ENCODE measurements at regions of chr20 and their contacts with region 1.

Region 1: GRCh38 chr20:407133-407952 is 756 bp upstream of the RBCK1 start:
- DNase-seq: peak in 8 of 9 donors; percentile 31 to 74 (median 39)
- ATAC-seq: peak; percentile 49
- H3K4me3 ChIP-seq: peak overlapping the region; percentile 71
- H3K4me3 Mint-ChIP-seq: peak overlapping the region; percentile 86 to 96 (median 94)
- H3K27ac ChIP-seq: peak overlapping the region; percentile 83
- H3K27ac Mint-ChIP-seq: peak overlapping the region; percentile 89 to 99 (median 96)
- H3K4me1 ChIP-seq: peaks cover 20 to 32% of the 10 kb centered on the region in 2 donors
- H3K4me1 Mint-ChIP-seq: peaks cover 26 to 59% (median 46%) of the 10 kb centered on the region in 7 donors
- H3K27me3 ChIP-seq: no peaks in the 10 kb centered on the region
- H3K27me3 Mint-ChIP-seq: no peaks in the 10 kb centered on the region

Region 2: DNA sequence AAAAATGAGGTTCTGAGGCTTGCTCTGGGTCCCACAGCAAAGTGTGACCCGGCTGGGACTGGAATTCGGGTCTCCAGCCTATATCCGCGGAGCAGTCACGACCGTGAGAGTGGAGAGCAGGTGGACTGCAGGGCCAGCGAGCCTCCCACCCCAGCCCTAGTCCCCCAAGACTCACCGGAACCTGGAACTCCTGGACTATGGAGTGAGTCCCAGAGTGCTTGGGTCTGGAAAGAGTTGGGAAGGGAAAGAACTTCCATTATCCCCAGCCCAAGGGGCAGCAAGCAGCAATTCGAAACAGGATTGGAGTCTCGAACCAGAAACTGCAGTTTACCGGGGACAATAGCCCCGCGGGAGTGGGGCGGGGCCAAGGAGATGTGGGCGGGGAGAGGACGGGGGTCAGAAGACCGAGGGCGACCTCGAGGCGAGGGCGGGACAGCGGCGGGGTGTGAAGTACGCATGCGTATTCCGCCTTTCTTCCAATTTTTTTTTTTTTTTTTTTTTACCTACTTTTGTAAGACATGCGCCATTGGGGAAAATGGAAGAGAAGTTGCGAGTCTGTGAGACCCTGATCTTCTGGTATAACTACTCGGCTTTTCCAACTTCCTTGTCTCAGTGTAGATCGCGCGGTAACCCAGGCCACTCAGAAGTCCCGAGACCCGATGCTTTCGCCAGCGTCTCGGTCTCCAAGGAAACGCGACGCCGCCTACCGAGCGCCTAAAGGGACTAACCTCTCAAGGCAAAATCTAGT is 117.1 kb before region 1 on chr20 and contains the start of gene C20orf96:
- CTCF ChIA-PET with region 1: no interaction called
- POLR2A ChIA-PET with region 1: no interaction called
- intact Hi-C with region 1: loop called in 1 of 2 experiments (anchors 1 kb)
- DNase-seq: peak; percentile 69 to 89 (median 80)
- ATAC-seq: peak; percentile 96
- H3K4me3 ChIP-seq: peak within 1 kb of the TSS; percentile 52
- H3K4me3 Mint-ChIP-seq: no peak within 1 kb of the TSS
- H3K27ac ChIP-seq: peak within 1 kb of the TSS; percentile 62
- H3K27ac Mint-ChIP-seq: peak within 1 kb of the TSS in 3 of 9 donors; percentile 28 to 81 (median 69)
- H3K4me1 ChIP-seq: peaks cover 11 to 20% of the 10 kb centered on the region in 2 donors
- H3K4me1 Mint-ChIP-seq: peaks cover 1 to 35% (median 9%) of the 10 kb centered on the region in 7 donors
- H3K27me3 ChIP-seq: no peaks in the 10 kb centered on the region
- H3K27me3 Mint-ChIP-seq: no peaks in the 10 kb centered on the region
- total RNA-seq, gene C20orf96: 3.4 to 5.7 (median 4.8) TPM

Region 3: GRCh38 chr20:364905-365794 is 42.2 kb before region 1 on chr20:
- CTCF ChIA-PET with region 1: no interaction called
- POLR2A ChIA-PET with region 1: interaction called, 5 read pairs
- intact Hi-C with region 1: loop called in 1 of 2 experiments (anchors 1 kb)
- DNase-seq: no peak
- ATAC-seq: no peak
- H3K4me3 ChIP-seq: no peak overlapping the region
- H3K4me3 Mint-ChIP-seq: peak overlapping the region; percentile 41 to 73 (median 58)
- H3K27ac ChIP-seq: no peak overlapping the region
- H3K27ac Mint-ChIP-seq: peak overlapping the region in 7 of 9 donors; percentile 49 to 96 (median 82)
- H3K4me1 ChIP-seq: peaks cover 0 to 20% of the 10 kb centered on the region in 2 donors
- H3K4me1 Mint-ChIP-seq: peaks cover 23 to 55% (median 47%) of the 10 kb centered on the region in 7 donors
- H3K27me3 ChIP-seq: no peaks in the 10 kb centered on the region
- H3K27me3 Mint-ChIP-seq: no peaks in the 10 kb centered on the region

Region 4: GRCh38 chr20:431012-431904 is 23.9 kb after region 1 on chr20:
- CTCF ChIA-PET with region 1: no interaction called
- POLR2A ChIA-PET with region 1: interaction called, 12 read pairs
- intact Hi-C with region 1: loop called in 1 of 2 experiments (anchors 2 kb)
- DNase-seq: peak in 7 of 9 donors; percentile 25 to 47 (median 29)
- ATAC-seq: peak; percentile 65
- H3K4me3 ChIP-seq: no peak overlapping the region
- H3K4me3 Mint-ChIP-seq: no peak overlapping the region
- H3K27ac ChIP-seq: no peak overlapping the region
- H3K27ac Mint-ChIP-seq: peak overlapping the region in 7 of 9 donors; percentile 17 to 88 (median 72)
- H3K4me1 ChIP-seq: peaks cover 17 to 21% of the 10 kb centered on the region in 2 donors
- H3K4me1 Mint-ChIP-seq: peaks cover 27 to 57% (median 45%) of the 10 kb centered on the region in 7 donors
- H3K27me3 ChIP-seq: no peaks in the 10 kb centered on the region
- H3K27me3 Mint-ChIP-seq: no peaks in the 10 kb centered on the region

Region 5: GRCh38 chr20:462199-462991 is 55.1 kb after region 1 on chr20 and contains the start of gene TBC1D20:
- CTCF ChIA-PET with region 1: interaction called, 3 read pairs
- POLR2A ChIA-PET with region 1: interaction called, 5 read pairs
- intact Hi-C with region 1: loop called (anchors 1 kb)
- DNase-seq: peak; percentile 81 to 92 (median 89)
- ATAC-seq: peak; percentile 99
- H3K4me3 ChIP-seq: peak within 1 kb of the TSS; percentile 71
- H3K4me3 Mint-ChIP-seq: peak within 1 kb of the TSS; percentile 90 to 100 (median 97)
- H3K27ac ChIP-seq: peak within 1 kb of the TSS; percentile 85
- H3K27ac Mint-ChIP-seq: peak within 1 kb of the TSS; percentile 90 to 98 (median 95)
- H3K4me1 ChIP-seq: peaks cover 26 to 33% of the 10 kb centered on the region in 2 donors
- H3K4me1 Mint-ChIP-seq: peaks cover 31 to 55% (median 49%) of the 10 kb centered on the region in 7 donors
- H3K27me3 ChIP-seq: no peaks in the 10 kb centered on the region
- H3K27me3 Mint-ChIP-seq: peaks cover 0 to 2% (median 0%) of the 10 kb centered on the region in 5 donors
- total RNA-seq, gene TBC1D20: 26.3 to 45.7 (median 35.4) TPM

Region 6: GRCh38 chr20:543369-544152 is 136.2 kb after region 1 on chr20 and contains the start of gene CSNK2A1:
- CTCF ChIA-PET with region 1: no interaction called
- POLR2A ChIA-PET with region 1: interaction called, 4 read pairs
- intact Hi-C with region 1: loop called (anchors 1 to 5 kb)
- DNase-seq: peak; percentile 93 to 99 (median 97)
- ATAC-seq: peak; percentile 97
- H3K4me3 ChIP-seq: peak within 1 kb of the TSS; percentile 59
- H3K4me3 Mint-ChIP-seq: peak within 1 kb of the TSS; percentile 86 to 100 (median 91)
- H3K27ac ChIP-seq: peak within 1 kb of the TSS; percentile 94
- H3K27ac Mint-ChIP-seq: peak within 1 kb of the TSS; percentile 97 to 100 (median 98)
- H3K4me1 ChIP-seq: peaks cover 17 to 39% of the 10 kb centered on the region in 2 donors
- H3K4me1 Mint-ChIP-seq: peaks cover 40 to 58% (median 54%) of the 10 kb centered on the region in 7 donors
- H3K27me3 ChIP-seq: no peaks in the 10 kb centered on the region
- H3K27me3 Mint-ChIP-seq: peaks cover 0 to 9% (median 5%) of the 10 kb centered on the region in 5 donors
- total RNA-seq, gene CSNK2A1: 69.7 to 117 (median 90.8) TPM